PC-3 (cell line): ENCODE measurements at regions of chr3 and their contacts with region 1.

Region 1: DNA sequence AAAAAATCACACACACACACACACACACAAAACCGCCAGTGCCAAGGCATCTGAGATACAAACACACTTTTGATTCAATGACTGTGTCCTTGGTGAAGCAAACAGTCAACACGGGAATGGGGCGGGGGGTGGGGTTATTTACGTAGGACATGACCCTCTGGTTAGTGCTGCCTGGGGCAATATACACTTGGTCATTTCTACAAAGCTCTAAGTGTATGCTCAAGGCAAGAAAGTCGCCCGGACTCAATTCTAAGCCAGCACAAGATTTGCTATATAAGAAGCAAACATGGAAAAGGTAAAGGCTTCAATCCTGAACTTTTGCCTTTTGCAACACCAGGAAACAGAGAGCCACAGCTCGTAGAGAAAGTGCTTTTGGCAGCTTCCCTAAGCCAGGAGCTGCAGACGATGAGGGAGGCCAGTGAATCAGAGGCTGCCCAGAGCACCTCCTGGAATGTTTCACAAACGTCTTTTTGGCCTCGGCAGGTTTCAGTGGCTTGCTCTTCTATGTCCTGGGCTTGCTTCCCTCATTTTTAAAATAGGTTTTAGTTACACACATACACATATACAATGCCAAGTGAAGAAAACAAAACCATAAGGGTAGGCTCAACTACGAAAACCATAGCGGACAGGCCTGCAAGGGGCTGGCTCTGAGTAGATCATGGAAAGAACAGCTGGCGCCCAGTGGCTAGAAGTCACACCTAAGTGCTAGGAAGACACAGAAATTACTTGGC is 73.6 kb downstream of the TM4SF4 start:
- DNase-seq: peak; percentile 72
- ATAC-seq: peak; percentile 70
- H3K4me3 ChIP-seq: peak overlapping the region; percentile 3; the same call in 1 of the 2 replicates
- H3K27ac ChIP-seq: peak overlapping the region; percentile 88
- H3K4me1 ChIP-seq: peaks cover 22% of the 10 kb centered on the region
- H3K27me3 ChIP-seq: no peaks in the 10 kb centered on the region
- CTCF ChIP-seq: no peak

Region 2: DNA sequence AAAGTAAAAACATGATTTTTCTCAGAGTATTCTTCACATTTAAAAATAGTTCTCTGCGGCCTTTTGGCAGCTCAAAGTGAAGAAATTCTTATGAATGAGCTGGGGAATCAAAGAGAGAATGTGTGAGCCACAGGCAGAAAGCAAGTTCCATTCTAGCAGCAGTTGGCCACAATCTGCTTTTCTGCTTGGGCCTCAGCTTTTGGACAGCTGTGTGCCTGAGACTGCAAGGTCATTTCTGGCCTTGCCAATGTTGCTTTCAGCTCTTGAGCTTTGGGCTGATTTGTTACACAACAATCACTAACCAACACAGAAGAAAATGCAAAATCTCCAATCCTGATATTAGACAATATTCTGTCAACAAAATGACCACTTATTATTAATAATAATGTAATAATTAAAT is 88.0 kb before region 1 on chr3:
- CTCF ChIA-PET with region 1: no interaction called
- POLR2A ChIA-PET with region 1: interaction called, 10 read pairs
- intact Hi-C with region 1: no loop called
- DNase-seq: no peak
- ATAC-seq: no peak
- H3K4me3 ChIP-seq: no peak overlapping the region
- H3K27ac ChIP-seq: no peak overlapping the region
- H3K4me1 ChIP-seq: no peaks in the 10 kb centered on the region
- H3K27me3 ChIP-seq: no peaks in the 10 kb centered on the region
- CTCF ChIP-seq: no peak